ENCODE measurements at regions of chr11 and their contacts with region 1.

Region 1: DNA sequence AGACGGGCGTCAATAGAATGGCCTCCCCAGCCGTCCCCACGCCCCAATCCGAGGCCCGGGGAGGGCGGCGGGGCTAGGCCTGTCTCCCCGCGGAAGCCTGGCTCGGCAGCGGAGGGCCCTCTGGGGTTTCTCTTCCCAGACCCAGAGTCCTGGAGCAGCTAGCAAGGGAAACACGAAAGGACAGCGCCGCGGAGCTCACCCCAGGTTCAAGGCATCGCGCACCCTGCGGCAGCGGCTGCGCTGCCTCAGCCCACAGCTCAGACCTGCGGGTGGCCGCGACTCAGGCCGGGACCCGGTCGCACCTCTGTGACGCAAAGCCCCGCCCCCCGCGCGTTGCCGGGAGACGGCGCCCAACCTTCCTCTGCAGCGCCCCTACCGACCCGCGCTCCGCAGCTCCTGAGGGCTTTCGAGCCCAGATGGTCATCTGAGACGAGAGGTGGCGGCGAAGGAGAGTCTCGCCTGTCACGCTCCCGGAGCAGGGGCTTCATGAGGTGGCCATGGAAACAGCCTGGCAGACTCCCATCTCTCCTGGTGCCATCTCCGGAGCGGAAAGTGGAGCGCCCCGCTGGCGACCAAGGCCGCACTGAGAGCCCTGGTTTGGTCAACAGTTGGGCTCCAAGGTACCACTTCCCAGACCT is at the start of gene RNF141:
- DNase-seq: peak; percentile 84
- ATAC-seq: peak; percentile 89
- H3K4me3 ChIP-seq: peak within 1 kb of the TSS; percentile 76 to 83
- H3K27ac ChIP-seq: peak within 1 kb of the TSS; percentile 94
- H3K4me1 ChIP-seq: peaks cover 40 to 54% of the 10 kb centered on the region in 2 experiments
- H3K27me3 ChIP-seq: no peaks in the 10 kb centered on the region
- CTCF ChIP-seq: peak; percentile 57 to 83 (median 67); a peak in 5 of 6 replicates
- POLR2A ChIP-seq: peak; percentile 91
- RAD21 ChIP-seq: peak; percentile 53
- total RNA-seq, gene RNF141: 133 TPM

Region 2: DNA sequence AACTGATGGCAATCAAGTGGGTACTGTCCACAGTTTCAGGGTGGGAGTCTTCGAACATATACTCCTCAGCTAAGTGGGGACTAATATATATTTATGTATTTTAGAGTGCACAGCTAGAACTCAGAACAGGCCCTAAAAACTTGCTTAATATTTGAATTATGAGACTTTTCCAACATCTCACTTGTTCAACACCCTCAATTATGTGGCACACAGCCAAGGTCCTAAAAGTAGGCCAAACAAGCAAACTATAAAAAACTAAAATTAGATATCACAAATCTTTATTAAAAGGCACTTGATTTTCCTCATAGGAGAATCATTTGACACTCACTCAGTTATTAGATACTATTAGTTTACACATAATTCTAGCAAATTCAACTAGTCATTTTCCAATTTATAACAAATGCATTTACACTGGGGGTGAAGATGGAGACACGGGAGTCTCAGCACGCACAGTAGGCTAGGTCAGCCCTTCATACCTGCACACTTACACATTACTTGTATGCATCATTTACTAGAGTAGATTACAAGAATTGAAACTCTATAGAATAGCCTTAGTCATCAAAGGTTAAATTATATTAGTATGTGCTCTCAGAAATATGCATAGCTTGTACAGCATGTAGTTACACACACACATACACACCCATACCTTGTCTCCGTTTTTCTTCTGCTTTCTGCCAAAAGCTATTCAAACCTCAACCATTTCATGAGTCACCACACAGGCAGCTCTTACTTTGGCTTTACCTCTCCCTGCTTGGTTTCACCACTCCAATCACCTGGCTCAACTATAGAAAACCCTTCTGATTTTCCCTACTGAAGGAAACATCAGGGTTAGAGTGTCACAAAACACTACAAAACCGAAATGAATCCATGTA is 418.5 kb before region 1 on chr11:
- CTCF ChIA-PET with region 1: no interaction called
- POLR2A ChIA-PET with region 1: no interaction called
- RAD21 ChIA-PET with region 1: no interaction called
- intact Hi-C with region 1: no loop called
- DNase-seq: peak; percentile 77
- ATAC-seq: peak; percentile 99
- H3K4me3 ChIP-seq: peak overlapping the region in 1 of 2 experiments; percentile 26; a peak in 2 of 4 replicates
- H3K27ac ChIP-seq: peak overlapping the region; percentile 44; the same call in 1 of the 2 replicates
- H3K4me1 ChIP-seq: peaks cover 12 to 20% of the 10 kb centered on the region in 2 experiments; a peak in 3 of 4 replicates
- H3K27me3 ChIP-seq: no peaks in the 10 kb centered on the region
- CTCF ChIP-seq: no peak
- POLR2A ChIP-seq: no peak
- RAD21 ChIP-seq: no peak

Region 3: DNA sequence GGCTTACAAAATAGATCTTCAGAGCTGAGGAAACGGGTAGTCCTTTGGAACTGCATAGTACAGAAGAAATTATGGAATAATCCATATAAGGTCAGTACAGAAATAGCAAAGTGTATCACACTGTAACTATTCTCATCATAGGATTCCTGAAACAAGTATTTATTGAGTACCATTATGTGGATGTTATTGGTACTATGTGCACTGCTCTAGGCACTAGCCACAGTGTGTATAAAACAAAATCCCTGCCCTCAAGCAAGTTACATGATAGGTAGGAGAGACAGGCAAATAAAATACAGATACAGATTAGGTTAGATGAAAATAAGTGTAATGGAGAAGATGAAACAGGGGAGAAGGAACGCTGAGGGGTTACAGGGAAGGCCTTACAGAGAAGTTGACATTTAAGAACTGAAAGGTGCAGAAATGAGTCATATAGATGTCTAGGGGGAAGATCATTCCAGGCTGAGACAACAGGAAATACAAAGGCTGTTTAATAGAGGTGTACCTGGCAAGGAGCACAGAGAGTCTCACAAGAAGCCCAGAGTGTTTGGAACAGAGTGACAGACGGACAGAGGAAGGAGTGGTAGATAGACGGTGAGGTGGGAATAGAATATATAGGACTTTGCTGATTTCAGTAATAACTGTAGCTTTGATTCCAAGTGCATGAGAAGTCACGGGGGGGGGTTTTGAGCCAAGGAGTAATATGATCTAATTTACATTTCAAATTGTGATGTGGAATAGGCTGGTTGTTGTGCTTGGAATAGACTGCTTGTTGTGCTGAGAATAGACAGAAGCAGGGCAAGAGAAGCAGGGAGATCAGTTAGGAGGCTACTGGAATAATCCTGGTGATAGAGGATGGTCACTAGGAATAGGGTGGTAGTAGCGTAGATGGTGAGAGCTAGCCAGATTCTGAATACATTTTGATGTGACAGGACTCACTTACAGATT is 13.8 kb before region 1 on chr11:
- CTCF ChIA-PET with region 1: interaction called, 25 read pairs
- POLR2A ChIA-PET with region 1: interaction called, 15 read pairs
- RAD21 ChIA-PET with region 1: no interaction called
- intact Hi-C with region 1: no loop called
- DNase-seq: peak; percentile 88
- ATAC-seq: peak; percentile 88
- H3K4me3 ChIP-seq: peak overlapping the region; percentile 0 to 39; a peak in 3 of 4 replicates
- H3K27ac ChIP-seq: peak overlapping the region; percentile 90
- H3K4me1 ChIP-seq: peaks cover 54 to 87% of the 10 kb centered on the region in 2 experiments
- H3K27me3 ChIP-seq: no peaks in the 10 kb centered on the region
- CTCF ChIP-seq: no peak
- POLR2A ChIP-seq: no peak
- RAD21 ChIP-seq: 0 out of 2 replicates have a peak, but pooled peaks have one; percentile 8